PC-9 (cell line): ENCODE measurements at regions of chr5 and their contacts with region 1.

Region 1: GRCh38 chr5:132293066-132293991 is 865 bp upstream of the SLC22A4 start:
- DNase-seq: peak; percentile 60 to 78
- H3K4me3 ChIP-seq: peak overlapping the region; percentile 63
- H3K27ac ChIP-seq: peak overlapping the region; percentile 79
- H3K4me1 ChIP-seq: peaks cover 28% of the 10 kb centered on the region
- H3K27me3 ChIP-seq: no peaks in the 10 kb centered on the region
- CTCF ChIP-seq: no peak; the same call in 1 of the 2 replicates

Region 2: GRCh38 chr5:131005963-131006684 is 1287.2 kb before region 1 on chr5:
- CTCF ChIA-PET with region 1: no interaction called
- POLR2A ChIA-PET with region 1: no interaction called
- intact Hi-C with region 1: no loop called
- DNase-seq: no peak
- H3K4me3 ChIP-seq: no peak overlapping the region
- H3K27ac ChIP-seq: no peak overlapping the region
- H3K4me1 ChIP-seq: no peaks in the 10 kb centered on the region
- H3K27me3 ChIP-seq: no peaks in the 10 kb centered on the region
- CTCF ChIP-seq: no peak; the same call in 1 of the 2 replicates

Region 3: DNA sequence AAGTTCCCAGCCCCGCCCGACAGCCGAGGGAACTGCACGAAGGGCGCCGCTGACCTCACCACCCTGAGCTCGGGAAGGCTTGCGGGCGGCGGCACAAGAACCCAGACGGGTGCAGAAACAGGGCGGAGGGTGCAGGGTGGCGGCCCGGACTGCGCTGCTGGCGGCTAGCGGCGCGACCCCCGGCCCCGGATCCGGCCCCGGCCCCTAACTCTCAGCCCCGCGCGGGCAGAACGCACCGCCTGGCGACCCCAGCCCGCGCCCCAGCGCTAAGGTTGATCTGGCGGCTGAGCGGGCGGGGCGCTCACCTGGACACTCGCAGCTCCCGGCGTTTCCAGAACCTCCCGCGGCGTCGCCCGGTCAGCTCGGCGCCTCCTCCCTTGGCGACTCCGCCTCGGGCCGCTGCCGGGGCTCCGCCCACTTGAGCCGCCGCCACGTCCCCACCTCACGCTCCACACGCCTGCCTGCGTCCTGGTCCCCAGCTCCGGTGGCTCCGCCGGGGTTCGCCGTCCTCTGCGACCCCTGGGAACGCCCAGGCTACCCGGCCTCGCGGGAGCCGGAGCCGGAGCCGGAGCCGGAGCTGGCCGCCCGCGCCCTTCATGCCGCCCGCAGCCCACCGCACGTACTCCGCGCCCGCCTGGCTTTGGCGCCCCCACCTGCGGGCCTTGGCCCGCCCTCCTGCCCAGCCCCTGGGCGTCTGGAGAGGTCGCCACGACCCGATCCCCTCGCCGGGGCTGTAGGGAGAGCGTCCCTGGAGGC is 65.7 kb before region 1 on chr5 and contains the start of gene P4HA2:
- CTCF ChIA-PET with region 1: no interaction called
- POLR2A ChIA-PET with region 1: no interaction called
- intact Hi-C with region 1: loop called (anchors 1 kb)
- DNase-seq: peak; percentile 65 to 85
- H3K4me3 ChIP-seq: peak within 1 kb of the TSS; percentile 78
- H3K27ac ChIP-seq: no peak within 1 kb of the TSS
- H3K4me1 ChIP-seq: peaks cover 12% of the 10 kb centered on the region
- H3K27me3 ChIP-seq: no peaks in the 10 kb centered on the region
- CTCF ChIP-seq: no peak; the same call in 1 of the 2 replicates
- total RNA-seq, gene P4HA2: 21.7 and 24.0 TPM in 2 replicates

Region 4: DNA sequence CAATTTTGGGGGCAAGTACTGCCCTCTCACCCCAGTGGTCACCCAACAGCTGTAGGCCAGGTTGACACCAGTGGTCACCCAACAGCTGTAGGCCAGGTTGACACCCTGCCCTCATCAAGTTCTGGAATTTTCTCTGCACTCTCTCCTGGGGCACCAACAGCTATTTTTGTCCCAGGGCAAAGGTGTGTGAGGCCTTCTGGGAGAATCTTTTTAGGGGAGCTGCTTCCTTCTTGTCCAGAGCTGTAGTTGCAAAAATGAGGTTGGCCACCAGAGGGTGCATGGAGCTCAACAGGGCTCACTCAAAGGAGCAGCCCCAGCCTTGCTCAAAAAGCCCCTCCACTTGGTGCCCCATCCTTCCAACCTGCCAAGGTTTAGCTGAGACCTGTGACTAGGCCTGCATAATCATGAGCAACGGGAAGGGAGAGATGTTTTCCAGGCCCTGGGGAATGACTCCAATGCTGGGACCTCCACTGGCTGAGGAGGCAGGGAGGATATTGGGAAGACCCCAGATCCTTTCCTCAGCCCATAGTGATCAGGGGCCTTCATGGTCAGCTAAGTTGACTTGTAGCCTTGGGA is 55.1 kb before region 1 on chr5:
- CTCF ChIA-PET with region 1: interaction called, 18 read pairs
- POLR2A ChIA-PET with region 1: no interaction called
- intact Hi-C with region 1: no loop called
- DNase-seq: peak; percentile 57 to 71
- H3K4me3 ChIP-seq: no peak overlapping the region
- H3K27ac ChIP-seq: no peak overlapping the region
- H3K4me1 ChIP-seq: peaks cover 4% of the 10 kb centered on the region; the same call in 1 of the 2 replicates
- H3K27me3 ChIP-seq: no peaks in the 10 kb centered on the region
- CTCF ChIP-seq: peak; percentile 89

Region 5: DNA sequence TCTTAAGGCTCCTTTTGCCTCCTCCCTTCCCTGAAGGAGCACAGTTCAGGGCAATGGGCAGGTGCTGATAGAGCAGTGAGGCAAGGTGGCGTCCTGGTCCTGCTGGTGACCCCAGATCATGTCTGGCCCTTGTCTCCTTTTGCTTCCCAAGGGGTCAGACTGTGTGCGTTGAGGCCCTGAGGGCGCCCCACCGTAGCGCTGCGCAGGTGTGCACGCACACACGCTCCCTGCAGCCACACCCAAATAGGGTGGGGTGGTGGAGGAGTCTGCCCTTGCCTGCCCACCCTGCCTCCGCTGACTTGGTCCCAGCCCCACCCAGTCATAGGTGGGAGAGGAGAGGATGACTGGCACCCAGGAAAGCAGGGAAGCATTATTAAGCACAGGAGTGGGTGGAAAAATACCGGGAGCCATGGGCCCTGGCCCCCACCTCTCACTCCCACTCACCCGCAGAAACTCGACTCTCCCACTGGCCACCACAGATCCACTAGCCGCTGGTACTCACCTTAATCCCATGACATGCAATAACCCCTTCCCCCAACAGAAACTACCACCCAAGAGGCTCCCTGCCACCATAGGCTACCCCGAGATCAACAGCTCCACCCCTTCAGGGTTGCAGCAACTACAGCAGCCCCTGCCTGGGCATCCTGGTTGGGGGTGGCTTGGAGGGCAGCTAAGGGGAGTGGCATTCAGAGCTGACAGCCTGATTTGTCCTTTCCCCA is 19.1 kb before region 1 on chr5:
- CTCF ChIA-PET with region 1: no interaction called
- POLR2A ChIA-PET with region 1: interaction called, 14 read pairs
- intact Hi-C with region 1: no loop called
- DNase-seq: no peak
- H3K4me3 ChIP-seq: no peak overlapping the region
- H3K27ac ChIP-seq: no peak overlapping the region
- H3K4me1 ChIP-seq: no peaks in the 10 kb centered on the region
- H3K27me3 ChIP-seq: no peaks in the 10 kb centered on the region
- CTCF ChIP-seq: no peak

Region 6: DNA sequence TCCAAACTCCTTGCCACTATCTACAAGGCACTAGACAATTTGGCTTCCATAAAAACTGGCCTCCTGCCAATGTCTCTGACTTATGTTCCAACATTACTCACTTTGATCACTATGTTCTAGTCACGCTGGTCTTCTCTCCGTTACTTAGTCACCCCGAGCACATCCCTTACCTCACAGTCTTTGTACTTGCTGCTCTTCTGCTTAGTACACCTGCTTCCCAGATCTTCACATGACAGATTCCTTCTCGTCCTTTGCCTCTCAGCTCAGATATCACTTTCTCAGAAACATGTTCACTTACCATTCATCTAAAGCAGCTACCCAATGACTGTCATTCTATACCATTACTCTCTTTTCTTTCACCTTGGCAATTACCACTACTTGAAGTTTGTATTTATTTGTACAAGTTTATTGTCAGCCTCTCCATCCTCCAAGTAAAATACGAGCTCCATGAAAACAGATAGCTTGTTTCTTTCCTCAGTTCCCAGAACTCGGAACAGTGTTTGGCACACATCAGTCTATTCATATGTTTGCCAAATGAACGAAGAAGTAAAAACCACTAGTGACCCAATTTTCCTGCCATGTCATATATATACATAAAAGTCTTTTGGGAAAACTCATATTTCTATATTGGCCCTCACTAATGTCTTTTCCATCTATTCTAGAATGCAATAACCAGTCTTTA is 70.2 kb after region 1 on chr5:
- CTCF ChIA-PET with region 1: no interaction called
- POLR2A ChIA-PET with region 1: interaction called, 9 read pairs
- intact Hi-C with region 1: loop called (anchors 2 kb)
- DNase-seq: peak; percentile 49 to 62
- H3K4me3 ChIP-seq: no peak overlapping the region
- H3K27ac ChIP-seq: peak overlapping the region; percentile 92; the same call in 1 of the 2 replicates
- H3K4me1 ChIP-seq: peaks cover 43% of the 10 kb centered on the region
- H3K27me3 ChIP-seq: no peaks in the 10 kb centered on the region
- CTCF ChIP-seq: no peak

Region 7: GRCh38 chr5:132369474-132370180 is 76.3 kb after region 1 on chr5 and contains the start of gene SLC22A5:
- CTCF ChIA-PET with region 1: interaction called, 15 read pairs
- POLR2A ChIA-PET with region 1: interaction called, 9 read pairs
- intact Hi-C with region 1: loop called (anchors 2 kb)
- DNase-seq: peak; percentile 63 to 83
- H3K4me3 ChIP-seq: peak within 1 kb of the TSS; percentile 75
- H3K27ac ChIP-seq: peak within 1 kb of the TSS; percentile 45
- H3K4me1 ChIP-seq: peaks cover 67% of the 10 kb centered on the region
- H3K27me3 ChIP-seq: no peaks in the 10 kb centered on the region
- CTCF ChIP-seq: no peak
- total RNA-seq, gene SLC22A5: 13.5 and 15.2 TPM in 2 replicates

Region 8: GRCh38 chr5:132490486-132491367 is 197.4 kb after region 1 on chr5 and contains the start of gene IRF1:
- CTCF ChIA-PET with region 1: no interaction called
- POLR2A ChIA-PET with region 1: no interaction called
- intact Hi-C with region 1: loop called (anchors 10 kb)
- DNase-seq: peak; percentile 88 to 98
- H3K4me3 ChIP-seq: peak within 1 kb of the TSS; percentile 96
- H3K27ac ChIP-seq: peak within 1 kb of the TSS; percentile 72
- H3K4me1 ChIP-seq: peaks cover 38% of the 10 kb centered on the region
- H3K27me3 ChIP-seq: no peaks in the 10 kb centered on the region
- CTCF ChIP-seq: no peak
- total RNA-seq, gene IRF1: 27.1 and 38.9 TPM in 2 replicates